ENCODE measurements at regions of chr2 and their contacts with region 1.

Region 1: DNA sequence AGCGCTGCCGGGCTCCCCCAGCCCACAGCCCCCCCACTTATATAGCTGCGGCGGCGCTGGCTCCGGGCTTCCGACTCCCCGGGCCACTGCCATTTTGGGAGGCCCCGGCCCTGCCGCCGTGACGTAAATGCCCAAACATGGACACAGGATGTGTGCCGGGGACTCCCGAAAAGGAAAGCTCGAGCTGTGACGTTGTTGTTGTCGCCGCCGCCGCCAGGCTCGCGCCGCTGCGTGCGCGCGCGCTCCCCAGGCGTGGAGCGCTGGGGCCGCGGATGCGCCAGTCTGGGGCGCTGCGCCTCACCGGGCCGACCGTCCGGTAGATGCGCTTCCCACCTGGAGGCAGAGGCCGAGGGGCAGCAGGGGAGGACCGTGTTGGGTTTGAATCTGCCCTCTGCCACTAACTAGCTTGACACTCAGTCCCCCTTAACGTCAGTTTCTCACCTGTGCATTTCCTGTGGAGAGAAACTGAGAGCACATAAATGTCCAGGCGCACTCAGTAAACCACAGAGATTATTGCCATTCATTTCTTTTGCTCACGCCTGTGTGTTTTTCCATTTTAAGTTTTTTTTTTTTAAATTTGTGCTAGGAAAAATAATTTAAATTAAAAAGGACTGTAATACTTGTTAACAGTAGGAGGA is at the start of gene EGR4:
- DNase-seq: peak; percentile 75
- H3K4me3 Mint-ChIP-seq: peak within 1 kb of the TSS; percentile 70
- H3K27ac Mint-ChIP-seq: peak within 1 kb of the TSS; percentile 31
- H3K4me1 Mint-ChIP-seq: peaks cover 22% of the 10 kb centered on the region
- H3K27me3 Mint-ChIP-seq: peaks cover 20% of the 10 kb centered on the region
- CTCF ChIP-seq: no peak
- total RNA-seq, gene EGR4: 0.22 and 0.37 TPM in 2 replicates

Region 2: GRCh38 chr2:73243884-73244570 is 49.6 kb before region 1 on chr2:
- CTCF ChIA-PET with region 1: interaction called, 13 read pairs
- POLR2A ChIA-PET with region 1: interaction called, 5 read pairs
- intact Hi-C with region 1: no loop called
- DNase-seq: peak; percentile 97
- H3K4me3 Mint-ChIP-seq: peak overlapping the region; percentile 9
- H3K27ac Mint-ChIP-seq: peak overlapping the region; percentile 61
- H3K4me1 Mint-ChIP-seq: peaks cover 24% of the 10 kb centered on the region
- H3K27me3 Mint-ChIP-seq: no peaks in the 10 kb centered on the region
- CTCF ChIP-seq: no peak

Region 3: GRCh38 chr2:73269686-73270465 is 23.8 kb before region 1 on chr2:
- CTCF ChIA-PET with region 1: interaction called, 15 read pairs
- POLR2A ChIA-PET with region 1: interaction called, 3 read pairs
- intact Hi-C with region 1: no loop called
- DNase-seq: no peak
- H3K4me3 Mint-ChIP-seq: no peak overlapping the region
- H3K27ac Mint-ChIP-seq: no peak overlapping the region
- H3K4me1 Mint-ChIP-seq: peaks cover 6% of the 10 kb centered on the region
- H3K27me3 Mint-ChIP-seq: peaks cover 20% of the 10 kb centered on the region
- CTCF ChIP-seq: no peak

Region 4: GRCh38 chr2:73385595-73386341 is 92.1 kb after region 1 on chr2 and contains the start of gene ALMS1:
- CTCF ChIA-PET with region 1: interaction called, 4 read pairs
- POLR2A ChIA-PET with region 1: interaction called, 5 read pairs
- intact Hi-C with region 1: loop called (anchors 10 kb)
- DNase-seq: peak; percentile 82
- H3K4me3 Mint-ChIP-seq: peak within 1 kb of the TSS; percentile 86
- H3K27ac Mint-ChIP-seq: peak within 1 kb of the TSS; percentile 89
- H3K4me1 Mint-ChIP-seq: peaks cover 13% of the 10 kb centered on the region
- H3K27me3 Mint-ChIP-seq: peaks cover 28% of the 10 kb centered on the region
- CTCF ChIP-seq: no peak
- total RNA-seq, gene ALMS1: 8.3 and 9.3 TPM in 2 replicates